CD14-positive monocyte (primary cell): ENCODE measurements at regions of chr16 and their contacts with region 1.

Region 1: DNA sequence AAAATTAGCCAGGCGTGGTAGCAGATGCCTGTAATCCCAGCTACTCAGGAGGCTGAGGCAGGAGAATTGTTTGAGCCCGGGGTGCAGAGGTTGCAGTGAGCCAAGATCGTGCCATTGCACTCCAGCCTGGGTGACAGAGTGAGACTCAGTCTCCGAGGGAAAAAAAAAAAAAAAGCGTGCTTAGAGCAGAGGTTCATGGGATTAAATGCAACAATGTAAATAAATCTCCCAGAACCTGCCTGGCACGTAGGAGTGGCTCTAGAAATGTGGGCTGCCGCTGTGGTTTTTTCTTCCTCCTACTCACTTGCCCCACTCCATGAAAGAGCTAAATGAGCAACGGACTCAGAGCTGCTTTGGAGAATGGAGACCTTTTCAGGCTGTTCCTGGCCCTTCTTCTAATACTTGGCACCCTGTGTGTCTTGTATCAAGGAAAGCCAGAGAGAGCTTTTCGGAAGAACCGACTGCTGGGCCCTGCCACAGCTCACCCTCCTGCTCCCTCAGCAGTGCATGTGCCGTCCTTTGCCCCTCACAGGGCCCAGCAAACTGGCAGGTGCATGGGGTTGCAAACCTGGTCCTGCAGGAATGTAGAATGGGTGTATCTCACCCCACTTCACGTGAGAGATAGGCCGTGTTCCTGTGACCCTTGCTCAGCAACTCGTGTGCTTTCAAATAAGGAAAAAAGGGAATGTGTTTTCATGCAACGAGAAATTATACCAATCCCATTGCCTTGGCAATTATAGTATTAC is 52.0 kb downstream of the LDHD start:
- DNase-seq: peak in 2 of 3 donors; percentile 21 to 31
- H3K4me3 ChIP-seq: peak overlapping the region in 1 of 3 experiments; percentile 54
- H3K4me3 Mint-ChIP-seq: peak overlapping the region; percentile 60 to 85
- H3K27ac ChIP-seq: peak overlapping the region; percentile 17 to 64
- H3K27ac Mint-ChIP-seq: peak overlapping the region in 5 of 7 donors; percentile 51 to 80 (median 73)
- H3K4me1 ChIP-seq: peaks cover 59 to 68% of the 10 kb centered on the region in 2 donors
- H3K4me1 Mint-ChIP-seq: peaks cover 68% of the 10 kb centered on the region
- H3K27me3 ChIP-seq: no peaks in the 10 kb centered on the region
- H3K27me3 Mint-ChIP-seq: peaks cover 0 to 2% (median 0%) of the 10 kb centered on the region in 3 donors
- CTCF ChIP-seq: no peak

Region 2: DNA sequence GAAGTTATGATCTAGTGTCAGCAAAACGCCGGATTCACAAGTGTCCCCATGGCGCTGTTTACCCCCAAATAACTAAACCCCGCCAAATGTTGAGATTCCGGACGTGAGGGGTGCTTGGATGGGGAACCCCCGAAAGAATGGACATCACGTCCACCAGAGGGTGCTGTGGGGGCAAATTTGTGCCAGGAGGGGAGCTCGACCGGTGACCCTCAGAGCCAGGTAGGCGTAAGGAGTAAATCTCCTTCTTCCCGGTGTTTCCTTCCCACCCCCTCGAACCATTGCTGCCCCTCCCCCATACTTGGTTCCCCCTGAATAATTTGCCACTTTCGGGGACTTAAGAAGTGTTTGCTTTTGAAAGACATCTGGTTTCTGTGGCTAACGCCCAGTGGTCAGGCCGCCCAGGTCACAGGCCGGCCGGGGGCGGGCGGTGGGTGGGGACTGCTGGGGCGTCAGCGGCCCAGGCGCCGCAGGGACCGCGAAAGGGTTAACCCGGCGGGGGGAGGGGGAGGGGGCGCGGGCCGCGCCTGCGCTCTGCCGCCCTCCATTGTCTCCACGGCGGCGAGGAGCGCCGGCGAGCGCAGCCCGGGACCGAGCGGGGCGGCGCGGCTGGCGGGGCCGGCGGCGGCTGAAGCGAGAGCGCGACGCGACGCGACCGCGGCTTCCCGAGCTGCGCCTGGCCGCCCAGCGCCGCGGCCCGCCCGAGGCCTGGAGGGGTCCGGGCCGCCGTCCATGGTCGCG is 65.9 kb before region 1 on chr16 and contains the start of gene ZNRF1:
- intact Hi-C with region 1: loop called in 1 of 2 experiments (anchors 10 kb)
- DNase-seq: peak; percentile 69 to 76 (median 75)
- H3K4me3 ChIP-seq: peak within 1 kb of the TSS; percentile 67 to 91 (median 87)
- H3K4me3 Mint-ChIP-seq: peak within 1 kb of the TSS; percentile 88 to 98
- H3K27ac ChIP-seq: peak within 1 kb of the TSS in 1 of 2 donors; percentile 89
- H3K27ac Mint-ChIP-seq: peak within 1 kb of the TSS; percentile 54 to 94 (median 89)
- H3K4me1 ChIP-seq: peaks cover 25 to 44% of the 10 kb centered on the region in 2 donors
- H3K4me1 Mint-ChIP-seq: peaks cover 35% of the 10 kb centered on the region
- H3K27me3 ChIP-seq: peaks cover 0 to 8% of the 10 kb centered on the region in 2 donors
- H3K27me3 Mint-ChIP-seq: peaks cover 11 to 19% (median 16%) of the 10 kb centered on the region in 3 donors
- CTCF ChIP-seq: peak; percentile 86
- polyA plus RNA-seq, gene ZNRF1: 1.9 to 5.3 (median 4.3) TPM

Region 3: DNA sequence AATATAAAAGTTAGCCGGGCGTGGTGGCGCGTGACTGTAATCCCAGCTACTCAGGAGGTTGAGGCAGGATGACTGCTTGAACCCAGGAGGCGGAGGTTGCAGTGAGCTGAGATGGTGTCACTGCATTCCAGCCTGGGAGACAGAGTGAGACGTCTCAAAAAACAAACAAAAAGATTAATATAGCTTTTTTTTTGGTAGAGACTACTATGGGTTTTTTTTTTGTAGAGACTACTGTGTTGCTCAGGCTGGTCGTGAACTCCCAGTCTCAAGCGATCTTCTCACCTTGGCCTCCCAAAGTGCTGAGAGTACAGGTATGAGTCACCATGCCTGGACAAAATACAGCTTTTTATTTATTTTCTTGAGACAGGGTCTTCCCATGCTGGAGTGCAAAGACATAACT is 45.6 kb before region 1 on chr16:
- intact Hi-C with region 1: no loop called
- DNase-seq: no peak
- H3K4me3 ChIP-seq: no peak overlapping the region
- H3K4me3 Mint-ChIP-seq: no peak overlapping the region
- H3K27ac ChIP-seq: no peak overlapping the region
- H3K27ac Mint-ChIP-seq: peak overlapping the region in 2 of 7 donors; percentile 10 to 75
- H3K4me1 ChIP-seq: peaks cover 5 to 19% of the 10 kb centered on the region in 2 donors
- H3K4me1 Mint-ChIP-seq: peaks cover 22% of the 10 kb centered on the region
- H3K27me3 ChIP-seq: no peaks in the 10 kb centered on the region
- H3K27me3 Mint-ChIP-seq: no peaks in the 10 kb centered on the region
- CTCF ChIP-seq: no peak

Region 4: GRCh38 chr16:75029557-75030253 is 34.9 kb before region 1 on chr16:
- intact Hi-C with region 1: loop called in 1 of 2 experiments (anchors 5 kb)
- DNase-seq: no peak
- H3K4me3 ChIP-seq: no peak overlapping the region
- H3K4me3 Mint-ChIP-seq: no peak overlapping the region
- H3K27ac ChIP-seq: no peak overlapping the region
- H3K27ac Mint-ChIP-seq: no peak overlapping the region
- H3K4me1 ChIP-seq: peaks cover 15 to 16% of the 10 kb centered on the region in 2 donors
- H3K4me1 Mint-ChIP-seq: peaks cover 21% of the 10 kb centered on the region
- H3K27me3 ChIP-seq: no peaks in the 10 kb centered on the region
- H3K27me3 Mint-ChIP-seq: peaks cover 0 to 2% (median 0%) of the 10 kb centered on the region in 3 donors
- CTCF ChIP-seq: no peak

Region 5: GRCh38 chr16:75099756-75100602 is 35.4 kb after region 1 on chr16:
- intact Hi-C with region 1: no loop called
- DNase-seq: peak; percentile 44 to 52 (median 51)
- H3K4me3 ChIP-seq: peak overlapping the region in 1 of 3 experiments; percentile 57
- H3K4me3 Mint-ChIP-seq: peak overlapping the region; percentile 50 to 71
- H3K27ac ChIP-seq: peak overlapping the region; percentile 48 to 74
- H3K27ac Mint-ChIP-seq: peak overlapping the region; percentile 65 to 85 (median 78)
- H3K4me1 ChIP-seq: peaks cover 31 to 37% of the 10 kb centered on the region in 2 donors
- H3K4me1 Mint-ChIP-seq: peaks cover 44% of the 10 kb centered on the region
- H3K27me3 ChIP-seq: no peaks in the 10 kb centered on the region
- H3K27me3 Mint-ChIP-seq: peaks cover 0 to 1% (median 1%) of the 10 kb centered on the region in 3 donors
- CTCF ChIP-seq: no peak

Region 6: GRCh38 chr16:75110637-75111513 is 46.3 kb after region 1 on chr16:
- intact Hi-C with region 1: loop called in 1 of 2 experiments (anchors 5 kb)
- DNase-seq: peak; percentile 80 to 83 (median 83)
- H3K4me3 ChIP-seq: peak overlapping the region in 1 of 3 experiments; percentile 47
- H3K4me3 Mint-ChIP-seq: peak overlapping the region; percentile 62 to 73
- H3K27ac ChIP-seq: peak overlapping the region in 1 of 2 donors; percentile 23
- H3K27ac Mint-ChIP-seq: peak overlapping the region in 6 of 7 donors; percentile 75 to 88 (median 82)
- H3K4me1 ChIP-seq: peaks cover 76 to 78% of the 10 kb centered on the region in 2 donors
- H3K4me1 Mint-ChIP-seq: peaks cover 72% of the 10 kb centered on the region
- H3K27me3 ChIP-seq: peaks cover 0 to 23% of the 10 kb centered on the region in 2 donors
- H3K27me3 Mint-ChIP-seq: peaks cover 22 to 32% (median 26%) of the 10 kb centered on the region in 3 donors
- CTCF ChIP-seq: peak; percentile 91